Activated B cell treated with CpG ODN at 0.5 μM for 24 hours (primary cell): ENCODE measurements at regions of chr4 and their contacts with region 1.

Region 1: DNA sequence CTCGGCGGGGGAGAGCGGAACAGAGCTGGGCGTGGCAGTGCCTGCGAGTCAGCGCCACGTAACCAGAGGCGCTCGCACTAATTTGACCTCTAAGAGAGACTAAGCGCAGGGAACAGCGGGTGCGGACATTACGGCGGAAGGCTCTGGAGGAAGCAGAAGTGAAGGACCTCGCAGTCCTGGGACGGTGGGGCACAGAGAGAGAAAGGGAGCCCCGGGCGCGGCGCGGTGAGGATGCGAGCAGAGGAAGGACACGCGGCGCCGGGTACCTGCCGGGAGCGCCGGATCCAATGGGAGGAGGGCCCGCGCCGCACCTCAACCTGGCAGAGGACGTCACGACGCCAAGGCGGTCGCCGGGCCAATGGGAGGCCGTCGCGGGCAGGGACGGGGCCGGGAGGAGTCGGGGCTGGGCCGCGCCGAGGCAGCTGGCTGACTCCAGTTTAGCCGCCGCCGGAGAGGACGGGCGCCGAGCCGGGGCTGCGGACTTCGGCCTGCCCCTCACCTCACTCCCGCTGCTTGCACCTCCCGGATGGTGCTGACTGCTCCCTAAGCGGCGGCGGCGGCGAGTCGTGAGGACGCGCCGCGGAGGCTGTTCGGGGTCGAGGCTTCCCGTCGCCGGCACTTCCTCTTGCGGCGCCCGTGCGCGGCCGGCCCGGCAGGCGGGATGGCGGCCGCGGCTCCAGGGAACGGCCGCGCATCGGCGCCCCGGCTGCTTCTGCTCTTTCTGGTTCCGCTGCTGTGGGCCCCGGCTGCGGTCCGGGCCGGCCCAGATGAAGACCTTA is at the start of gene TMEM165:
- DNase-seq: peak; percentile 89
- ATAC-seq: peak; percentile 92
- H3K4me3 Mint-ChIP-seq: peak within 1 kb of the TSS; percentile 91
- H3K27ac Mint-ChIP-seq: peak within 1 kb of the TSS; percentile 95
- H3K4me1 Mint-ChIP-seq: peaks cover 42% of the 10 kb centered on the region
- H3K27me3 Mint-ChIP-seq: no peaks in the 10 kb centered on the region
- CTCF ChIP-seq: no peak
- total RNA-seq, gene TMEM165: 80.3 and 90.2 TPM in 2 replicates

Region 2: GRCh38 chr4:55103224-55103623 is 292.5 kb before region 1 on chr4:
- CTCF ChIA-PET with region 1: no interaction called
- POLR2A ChIA-PET with region 1: no interaction called
- intact Hi-C with region 1: no loop called
- DNase-seq: no peak
- ATAC-seq: no peak
- H3K4me3 Mint-ChIP-seq: no peak overlapping the region
- H3K27ac Mint-ChIP-seq: no peak overlapping the region
- H3K4me1 Mint-ChIP-seq: no peaks in the 10 kb centered on the region
- H3K27me3 Mint-ChIP-seq: no peaks in the 10 kb centered on the region
- CTCF ChIP-seq: no peak

Region 3: GRCh38 chr4:55345980-55346850 is 49.5 kb before region 1 on chr4 and contains the start of gene SRD5A3:
- CTCF ChIA-PET with region 1: interaction called, 7 read pairs
- POLR2A ChIA-PET with region 1: interaction called, 21 read pairs
- intact Hi-C with region 1: loop called (anchors 1 kb)
- DNase-seq: peak; percentile 87
- ATAC-seq: peak; percentile 89
- H3K4me3 Mint-ChIP-seq: peak within 1 kb of the TSS; percentile 93
- H3K27ac Mint-ChIP-seq: peak within 1 kb of the TSS; percentile 94
- H3K4me1 Mint-ChIP-seq: peaks cover 13% of the 10 kb centered on the region
- H3K27me3 Mint-ChIP-seq: peaks cover under 1% of the 10 kb centered on the region
- CTCF ChIP-seq: no peak
- total RNA-seq, gene SRD5A3: 4.5 and 5.7 TPM in 2 replicates

Region 4: GRCh38 chr4:55475394-55476243 is 79.9 kb after region 1 on chr4:
- CTCF ChIA-PET with region 1: no interaction called
- POLR2A ChIA-PET with region 1: no interaction called
- intact Hi-C with region 1: no loop called
- DNase-seq: no peak
- ATAC-seq: no peak
- H3K4me3 Mint-ChIP-seq: no peak overlapping the region
- H3K27ac Mint-ChIP-seq: no peak overlapping the region
- H3K4me1 Mint-ChIP-seq: no peaks in the 10 kb centered on the region
- H3K27me3 Mint-ChIP-seq: no peaks in the 10 kb centered on the region
- CTCF ChIP-seq: no peak

Region 5: GRCh38 chr4:55654131-55654530 is 258.4 kb after region 1 on chr4:
- CTCF ChIA-PET with region 1: no interaction called
- POLR2A ChIA-PET with region 1: no interaction called
- intact Hi-C with region 1: no loop called
- DNase-seq: no peak
- ATAC-seq: no peak
- H3K4me3 Mint-ChIP-seq: no peak overlapping the region
- H3K27ac Mint-ChIP-seq: no peak overlapping the region
- H3K4me1 Mint-ChIP-seq: no peaks in the 10 kb centered on the region
- H3K27me3 Mint-ChIP-seq: peaks cover 10% of the 10 kb centered on the region
- CTCF ChIP-seq: no peak

Region 6: DNA sequence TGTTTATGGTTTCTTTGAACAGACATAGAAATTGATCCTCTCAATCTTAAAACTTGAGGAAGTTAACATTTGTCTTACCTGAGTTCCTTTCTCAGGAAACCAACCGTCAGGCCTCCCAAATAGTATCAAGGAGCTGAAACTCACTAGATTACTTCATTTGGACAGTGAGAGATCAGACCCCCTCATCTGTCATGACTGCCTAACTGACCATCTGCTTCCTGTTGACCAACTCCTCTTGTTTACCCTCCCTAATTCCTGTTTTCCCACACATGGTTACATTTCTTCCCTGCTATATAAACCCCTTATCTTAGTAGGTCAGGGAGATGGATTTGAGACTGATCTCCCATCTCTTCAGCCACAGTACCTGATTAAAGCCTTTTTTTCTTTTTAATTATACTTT is 286.6 kb after region 1 on chr4:
- CTCF ChIA-PET with region 1: no interaction called
- POLR2A ChIA-PET with region 1: no interaction called
- intact Hi-C with region 1: no loop called
- DNase-seq: no peak
- ATAC-seq: no peak
- H3K4me3 Mint-ChIP-seq: no peak overlapping the region
- H3K27ac Mint-ChIP-seq: no peak overlapping the region
- H3K4me1 Mint-ChIP-seq: no peaks in the 10 kb centered on the region
- H3K27me3 Mint-ChIP-seq: peaks cover 1% of the 10 kb centered on the region
- CTCF ChIP-seq: no peak

Region 7: DNA sequence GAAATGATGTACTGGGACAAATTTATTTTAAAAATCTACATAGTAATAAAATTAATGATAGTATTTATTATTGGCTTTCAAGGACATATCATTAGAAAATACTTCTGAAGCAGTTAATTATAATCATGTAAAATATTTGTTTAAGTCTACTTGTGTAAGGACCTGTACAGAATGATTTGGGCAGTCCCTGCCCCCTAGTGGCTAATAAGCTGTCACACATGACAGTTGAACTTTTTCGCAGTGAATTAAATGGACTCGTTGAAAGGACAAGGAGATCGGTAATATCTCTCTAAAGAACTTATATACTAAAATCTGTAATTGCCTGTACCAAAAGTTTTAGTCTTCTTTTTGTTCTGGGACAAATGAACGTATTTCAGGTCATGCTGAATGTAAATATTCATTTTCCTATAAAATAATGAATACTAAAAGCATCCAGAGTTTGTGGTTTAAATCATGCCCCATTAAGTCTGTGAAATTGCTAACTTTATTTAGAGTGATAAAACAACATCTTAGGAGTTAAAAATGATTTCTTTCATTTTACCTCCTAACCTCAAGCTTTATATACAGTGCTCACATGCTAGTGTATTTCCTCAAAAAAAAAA is 471.4 kb after region 1 on chr4:
- CTCF ChIA-PET with region 1: interaction called, 11 read pairs
- POLR2A ChIA-PET with region 1: no interaction called
- intact Hi-C with region 1: no loop called
- DNase-seq: no peak
- ATAC-seq: peak; percentile 84
- H3K4me3 Mint-ChIP-seq: no peak overlapping the region
- H3K27ac Mint-ChIP-seq: no peak overlapping the region
- H3K4me1 Mint-ChIP-seq: peaks cover 22% of the 10 kb centered on the region
- H3K27me3 Mint-ChIP-seq: no peaks in the 10 kb centered on the region
- CTCF ChIP-seq: no peak

Region 8: DNA sequence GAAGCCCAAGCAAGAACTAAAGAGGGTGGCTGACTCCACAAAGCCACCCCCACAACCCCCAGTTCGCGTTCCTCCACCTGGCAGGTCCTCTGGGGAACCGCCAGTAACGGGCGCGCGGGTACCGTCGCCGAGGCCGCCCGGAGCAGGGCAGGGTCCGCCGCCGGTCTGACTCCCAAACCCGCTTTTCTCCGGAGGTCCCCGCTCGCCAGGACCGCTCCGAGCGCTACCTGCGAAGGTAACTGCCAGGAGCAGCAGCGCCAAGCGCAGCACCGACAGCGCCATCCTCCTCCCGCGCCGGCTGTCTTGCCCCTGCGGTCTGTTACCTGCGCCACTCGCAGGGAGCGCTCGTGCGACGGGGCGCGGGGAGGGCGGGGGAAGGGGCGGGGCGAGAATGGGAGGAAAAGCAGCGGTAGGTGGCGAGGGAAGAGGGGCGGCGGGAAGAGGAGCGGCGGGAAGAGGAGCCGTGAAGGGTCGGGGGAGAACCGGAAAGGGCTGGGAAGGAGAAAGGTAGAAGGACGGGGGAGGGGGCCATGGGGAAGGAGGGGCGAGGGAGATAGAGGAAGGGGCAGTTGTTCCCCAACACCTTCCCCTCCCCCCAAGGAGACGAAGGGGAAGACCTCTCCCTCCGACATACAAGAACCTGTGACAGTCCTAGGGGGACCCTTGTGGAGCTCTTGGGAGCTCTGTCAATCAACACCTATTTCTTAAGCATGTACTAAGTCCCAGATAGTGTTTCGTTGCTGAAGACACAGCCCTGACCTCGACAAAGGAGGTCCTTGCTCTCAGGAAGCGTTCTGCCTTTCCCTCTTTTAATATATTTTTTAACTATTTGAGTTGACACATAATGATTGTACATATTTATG is 1425.9 kb after region 1 on chr4 and contains the start of gene SPINK2:
- CTCF ChIA-PET with region 1: no interaction called
- POLR2A ChIA-PET with region 1: no interaction called
- intact Hi-C with region 1: loop called (anchors 5 kb)
- DNase-seq: peak; percentile 58
- ATAC-seq: peak; percentile 87
- H3K4me3 Mint-ChIP-seq: peak within 1 kb of the TSS; percentile 81
- H3K27ac Mint-ChIP-seq: peak within 1 kb of the TSS; percentile 24
- H3K4me1 Mint-ChIP-seq: peaks cover 31% of the 10 kb centered on the region
- H3K27me3 Mint-ChIP-seq: no peaks in the 10 kb centered on the region
- CTCF ChIP-seq: no peak
- total RNA-seq, gene SPINK2: 1.2 TPM in 1 of 2 replicates, not detected in the other